HEK293 (cell line): ENCODE measurements at regions of chr20 and their contacts with region 1.

Region 1: GRCh38 chr20:31560094-31560899 is 44.8 kb upstream of the ID1 start:
- H3K4me3 ChIP-seq: no peak overlapping the region
- H3K27ac ChIP-seq: no peak overlapping the region
- H3K4me1 ChIP-seq: no peaks in the 10 kb centered on the region
- CTCF ChIP-seq: peak; percentile 68

Region 2: GRCh38 chr20:31543966-31544598 is 16.2 kb before region 1 on chr20:
- CTCF ChIA-PET with region 1: interaction called, 14 read pairs
- POLR2A ChIA-PET with region 1: interaction called, 3 read pairs
- H3K4me3 ChIP-seq: no peak overlapping the region
- H3K27ac ChIP-seq: no peak overlapping the region
- H3K4me1 ChIP-seq: no peaks in the 10 kb centered on the region
- CTCF ChIP-seq: no peak

Region 3: GRCh38 chr20:31572701-31573554 is 12.6 kb after region 1 on chr20:
- CTCF ChIA-PET with region 1: interaction called, 113 read pairs
- POLR2A ChIA-PET with region 1: interaction called, 11 read pairs
- H3K4me3 ChIP-seq: peak overlapping the region; percentile 41
- H3K27ac ChIP-seq: peak overlapping the region; percentile 88
- H3K4me1 ChIP-seq: peaks cover 8% of the 10 kb centered on the region
- CTCF ChIP-seq: no peak